ENCODE measurements at regions of chr19 and their contacts with region 1.

Region 1: DNA sequence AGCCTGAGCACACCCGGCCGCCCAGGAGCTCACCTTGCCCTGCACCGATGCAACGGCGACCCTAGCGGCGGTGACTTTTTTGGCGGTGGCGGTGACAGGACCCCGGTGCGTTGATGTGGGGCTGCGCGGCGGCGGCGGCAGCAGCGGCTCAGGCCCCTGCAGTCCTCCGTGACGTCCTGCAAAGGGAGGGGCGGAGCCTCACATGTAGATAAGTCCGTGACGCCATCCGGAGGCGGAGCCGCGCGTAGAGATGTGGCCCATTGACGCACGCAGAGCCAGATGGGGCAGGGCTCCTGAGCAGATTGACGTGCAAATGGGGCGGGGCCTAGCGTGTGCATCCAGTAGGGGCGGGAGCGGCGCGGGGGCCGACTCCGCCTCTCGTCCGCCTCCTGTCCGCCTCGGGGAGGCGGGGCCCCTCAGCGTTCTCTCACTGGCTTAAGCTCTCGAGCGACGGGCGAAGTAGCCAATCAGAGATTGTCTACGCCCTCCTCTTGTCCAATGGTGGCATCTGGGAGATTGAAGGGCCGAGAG is at the start of gene RAB3A:
- DNase-seq: peak; percentile 100
- ATAC-seq: peak; percentile 94 to 96
- total RNA-seq, gene RAB3A: 23.8 to 29.2 TPM

Region 2: DNA sequence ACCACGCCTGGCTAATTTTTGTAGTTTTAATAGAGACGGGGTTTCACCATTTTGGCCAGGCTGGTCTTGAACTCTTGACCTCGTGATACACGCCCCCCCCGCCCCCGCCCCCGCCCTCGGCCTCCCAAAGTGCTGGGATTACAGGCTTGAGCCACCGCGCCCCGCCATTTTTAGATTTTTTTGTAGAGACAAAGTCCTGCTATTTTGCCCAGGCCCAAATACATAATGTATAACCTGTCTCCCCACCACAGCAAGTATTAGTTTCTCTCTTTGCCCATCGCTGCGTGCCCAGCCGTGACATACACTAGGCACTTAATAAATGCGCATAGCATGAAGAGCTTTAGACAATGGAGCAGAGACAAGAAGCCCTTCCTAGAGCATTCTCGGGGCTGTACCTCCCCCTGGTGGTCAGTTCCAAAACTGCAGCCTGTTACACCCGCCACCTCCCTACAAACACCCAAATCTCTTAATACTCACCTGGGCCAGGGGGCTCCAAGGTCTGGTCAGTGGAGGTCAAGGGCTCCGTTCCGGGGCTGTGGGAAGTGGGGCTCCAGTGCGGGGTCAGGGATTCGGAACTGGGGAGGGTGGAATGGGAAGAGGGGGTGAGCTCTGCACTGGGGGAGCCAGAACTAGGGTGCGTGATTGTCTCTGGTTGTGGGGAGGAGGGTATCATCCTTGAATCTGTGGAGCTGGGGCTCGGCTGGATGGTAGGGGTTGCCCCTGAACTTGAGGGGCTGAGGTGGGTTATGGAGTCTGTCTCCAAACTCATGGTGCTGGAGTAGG is 47.9 kb after region 1 on chr19:
- intact Hi-C with region 1: loop called in 1 of 2 experiments (anchors 1 kb)
- DNase-seq: peak; percentile 68
- ATAC-seq: peak; percentile 58 to 76

Region 3: DNA sequence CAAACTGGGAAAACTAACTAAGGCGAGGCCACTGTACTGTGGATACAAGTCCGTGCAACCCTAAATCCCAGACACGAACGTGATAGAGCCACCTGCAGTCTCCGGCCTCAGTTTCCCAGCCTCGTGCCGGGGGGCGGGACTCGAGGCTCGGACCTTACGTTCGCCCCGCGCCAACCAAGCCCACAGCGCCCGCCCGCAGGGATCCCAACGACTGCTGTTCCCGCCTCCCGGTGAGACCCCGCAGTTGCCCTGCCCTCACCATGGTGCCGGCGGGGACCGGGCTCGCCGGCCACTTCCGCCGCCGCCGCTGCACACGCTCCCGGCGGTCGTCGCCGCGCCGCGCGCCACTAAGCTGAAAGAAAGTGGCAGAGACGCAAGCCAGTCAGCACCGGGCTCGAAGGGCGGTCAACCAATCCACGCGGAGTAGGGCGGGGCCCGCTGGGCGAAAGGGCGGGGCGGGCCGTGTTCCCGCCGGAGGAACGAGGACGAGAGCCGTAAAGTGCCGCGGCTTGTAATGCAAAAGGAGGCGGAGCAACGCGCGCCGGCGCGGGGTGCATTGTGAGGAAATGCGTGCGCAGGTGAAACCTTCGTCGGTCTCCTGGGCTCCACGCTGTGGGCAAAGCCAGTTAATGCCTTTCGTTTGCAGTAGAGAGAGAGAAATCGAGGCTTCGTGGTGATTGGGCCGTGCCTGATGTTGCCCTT is 119.0 kb after region 1 on chr19 and contains the start of gene LSM4:
- intact Hi-C with region 1: loop called in 1 of 2 experiments (anchors 2 kb)
- DNase-seq: peak; percentile 98
- ATAC-seq: peak; percentile 98
- total RNA-seq, gene LSM4: 68.9 to 79.0 TPM

Region 4: GRCh38 chr19:18419195-18419698 is 215.3 kb after region 1 on chr19 and contains the start of gene SSBP4:
- intact Hi-C with region 1: loop called in 1 of 2 experiments (anchors 10 kb)
- DNase-seq: peak; percentile 75
- ATAC-seq: peak; percentile 15 to 31
- total RNA-seq, gene SSBP4: 37.4 to 49.3 TPM

Measured in left cardiac atrium (tissue), 4 donors.